ENCODE measurements at regions of chr1 and their contacts with region 1.

Region 1: GRCh38 chr1:59020151-59020997 is 236.5 kb upstream of the JUN start:
- DNase-seq: peak; percentile 7 to 58 (median 43)
- ATAC-seq: peak; percentile 88
- H3K4me3 ChIP-seq: peak overlapping the region; percentile 38
- H3K4me3 Mint-ChIP-seq: peak overlapping the region; percentile 80 to 90 (median 84)
- H3K27ac ChIP-seq: peak overlapping the region; percentile 57
- H3K27ac Mint-ChIP-seq: peak overlapping the region; percentile 88 to 99 (median 94)
- H3K4me1 ChIP-seq: peaks cover 11 to 15% of the 10 kb centered on the region in 2 donors
- H3K4me1 Mint-ChIP-seq: peaks cover 16 to 56% (median 25%) of the 10 kb centered on the region in 7 donors
- H3K27me3 ChIP-seq: no peaks in the 10 kb centered on the region
- H3K27me3 Mint-ChIP-seq: no peaks in the 10 kb centered on the region

Region 2: GRCh38 chr1:58792846-58793245 is 227.5 kb before region 1 on chr1:
- CTCF ChIA-PET with region 1: no interaction called
- POLR2A ChIA-PET with region 1: no interaction called
- intact Hi-C with region 1: no loop called
- DNase-seq: no peak
- ATAC-seq: no peak
- H3K4me3 ChIP-seq: no peak overlapping the region
- H3K4me3 Mint-ChIP-seq: no peak overlapping the region
- H3K27ac ChIP-seq: no peak overlapping the region
- H3K27ac Mint-ChIP-seq: no peak overlapping the region
- H3K4me1 ChIP-seq: no peaks in the 10 kb centered on the region
- H3K4me1 Mint-ChIP-seq: peaks cover 21 to 75% (median 49%) of the 10 kb centered on the region in 7 donors
- H3K27me3 ChIP-seq: no peaks in the 10 kb centered on the region
- H3K27me3 Mint-ChIP-seq: no peaks in the 10 kb centered on the region

Region 3: DNA sequence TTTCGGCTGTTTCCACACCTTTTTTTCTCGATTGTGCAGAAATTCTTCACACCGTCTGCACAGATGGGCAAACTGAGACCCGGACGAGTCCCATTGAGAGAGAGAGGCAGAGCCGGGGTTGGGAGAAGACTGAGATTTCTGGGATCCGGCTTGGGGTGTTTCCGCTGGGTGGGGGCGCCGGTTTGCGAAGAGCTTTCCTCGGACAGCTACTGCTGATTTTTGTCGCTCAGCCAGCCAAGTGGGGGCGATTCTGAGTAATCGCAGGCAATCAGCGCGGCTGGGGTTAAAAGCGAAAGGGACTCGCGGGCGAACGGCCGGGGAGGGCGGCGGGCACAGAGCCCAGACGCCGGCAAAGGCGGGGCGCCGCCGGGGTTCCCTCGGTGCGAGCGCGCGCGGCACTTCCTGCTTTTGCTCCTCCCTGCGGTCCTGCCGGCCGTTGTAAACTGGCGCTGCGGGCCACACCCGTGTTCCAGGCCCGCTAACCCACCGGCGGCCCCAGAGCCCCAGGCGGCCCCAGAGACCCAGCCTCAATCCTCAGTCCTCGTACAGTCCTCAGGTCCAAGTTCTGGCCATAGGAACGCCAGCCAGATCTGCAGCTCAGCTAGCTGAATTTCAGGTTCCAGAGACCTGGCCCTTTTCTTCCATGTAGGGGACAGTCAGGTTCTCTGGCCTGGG is 204.2 kb before region 1 on chr1:
- CTCF ChIA-PET with region 1: no interaction called
- POLR2A ChIA-PET with region 1: no interaction called
- intact Hi-C with region 1: loop called in 1 of 2 experiments (anchors 1 kb)
- DNase-seq: peak; percentile 66 to 84 (median 71)
- ATAC-seq: peak; percentile 88
- H3K4me3 ChIP-seq: peak overlapping the region; percentile 89
- H3K4me3 Mint-ChIP-seq: peak overlapping the region; percentile 88 to 94 (median 92)
- H3K27ac ChIP-seq: peak overlapping the region; percentile 77
- H3K27ac Mint-ChIP-seq: peak overlapping the region; percentile 77 to 95 (median 90)
- H3K4me1 ChIP-seq: peaks cover 27 to 34% of the 10 kb centered on the region in 2 donors
- H3K4me1 Mint-ChIP-seq: peaks cover 19 to 49% (median 41%) of the 10 kb centered on the region in 7 donors
- H3K27me3 ChIP-seq: no peaks in the 10 kb centered on the region
- H3K27me3 Mint-ChIP-seq: peaks cover 0 to 5% (median 0%) of the 10 kb centered on the region in 5 donors

Region 4: GRCh38 chr1:58903514-58904298 is 116.7 kb before region 1 on chr1:
- CTCF ChIA-PET with region 1: no interaction called
- POLR2A ChIA-PET with region 1: no interaction called
- intact Hi-C with region 1: loop called in 1 of 2 experiments (anchors 1 kb)
- DNase-seq: peak; percentile 30 to 88 (median 49)
- ATAC-seq: peak; percentile 91
- H3K4me3 ChIP-seq: peak overlapping the region; percentile 60
- H3K4me3 Mint-ChIP-seq: peak overlapping the region; percentile 74 to 86 (median 80)
- H3K27ac ChIP-seq: peak overlapping the region; percentile 63
- H3K27ac Mint-ChIP-seq: peak overlapping the region in 8 of 9 donors; percentile 33 to 91 (median 74)
- H3K4me1 ChIP-seq: peaks cover 4% of the 10 kb centered on the region in 2 donors
- H3K4me1 Mint-ChIP-seq: peaks cover 5 to 38% (median 16%) of the 10 kb centered on the region in 7 donors
- H3K27me3 ChIP-seq: no peaks in the 10 kb centered on the region
- H3K27me3 Mint-ChIP-seq: no peaks in the 10 kb centered on the region

Region 5: GRCh38 chr1:58968360-58968952 is 51.9 kb before region 1 on chr1:
- CTCF ChIA-PET with region 1: no interaction called
- POLR2A ChIA-PET with region 1: no interaction called
- intact Hi-C with region 1: loop called in 1 of 2 experiments (anchors 1 kb)
- DNase-seq: peak in 6 of 9 donors; percentile 34 to 66 (median 56)
- ATAC-seq: peak; percentile 66
- H3K4me3 ChIP-seq: no peak overlapping the region
- H3K4me3 Mint-ChIP-seq: peak overlapping the region; percentile 55 to 84 (median 70)
- H3K27ac ChIP-seq: peak overlapping the region; percentile 72
- H3K27ac Mint-ChIP-seq: peak overlapping the region; percentile 91 to 100 (median 96)
- H3K4me1 ChIP-seq: peaks cover 16 to 28% of the 10 kb centered on the region in 2 donors
- H3K4me1 Mint-ChIP-seq: peaks cover 13 to 73% (median 41%) of the 10 kb centered on the region in 7 donors
- H3K27me3 ChIP-seq: no peaks in the 10 kb centered on the region
- H3K27me3 Mint-ChIP-seq: no peaks in the 10 kb centered on the region

Region 6: GRCh38 chr1:59062743-59063142 is 42.4 kb after region 1 on chr1:
- CTCF ChIA-PET with region 1: no interaction called
- POLR2A ChIA-PET with region 1: interaction called, 3 read pairs
- intact Hi-C with region 1: loop called in 1 of 2 experiments (anchors 1 kb)
- DNase-seq: no peak
- ATAC-seq: no peak
- H3K4me3 ChIP-seq: no peak overlapping the region
- H3K4me3 Mint-ChIP-seq: peak overlapping the region in 1 of 10 donors; percentile 44
- H3K27ac ChIP-seq: no peak overlapping the region
- H3K27ac Mint-ChIP-seq: peak overlapping the region in 7 of 9 donors; percentile 30 to 89 (median 60)
- H3K4me1 ChIP-seq: peaks cover 16 to 22% of the 10 kb centered on the region in 2 donors
- H3K4me1 Mint-ChIP-seq: peaks cover 14 to 43% (median 37%) of the 10 kb centered on the region in 7 donors
- H3K27me3 ChIP-seq: no peaks in the 10 kb centered on the region
- H3K27me3 Mint-ChIP-seq: no peaks in the 10 kb centered on the region

Measured in naive thymus-derived CD4-positive, alpha-beta T cell (primary cell).